ENCODE measurements at regions of chr17 and their contacts with region 1.

Region 1: GRCh38 chr17:28598799-28599310 is at the start of gene SPAG5:
- DNase-seq: peak; percentile 96
- H3K4me3 Mint-ChIP-seq: peak within 1 kb of the TSS; percentile 96
- H3K27ac Mint-ChIP-seq: peak within 1 kb of the TSS; percentile 98
- H3K4me1 Mint-ChIP-seq: peaks cover 26% of the 10 kb centered on the region
- H3K27me3 Mint-ChIP-seq: no peaks in the 10 kb centered on the region
- total RNA-seq, gene SPAG5: 81.9 and 83.1 TPM in 2 replicates

Region 2: DNA sequence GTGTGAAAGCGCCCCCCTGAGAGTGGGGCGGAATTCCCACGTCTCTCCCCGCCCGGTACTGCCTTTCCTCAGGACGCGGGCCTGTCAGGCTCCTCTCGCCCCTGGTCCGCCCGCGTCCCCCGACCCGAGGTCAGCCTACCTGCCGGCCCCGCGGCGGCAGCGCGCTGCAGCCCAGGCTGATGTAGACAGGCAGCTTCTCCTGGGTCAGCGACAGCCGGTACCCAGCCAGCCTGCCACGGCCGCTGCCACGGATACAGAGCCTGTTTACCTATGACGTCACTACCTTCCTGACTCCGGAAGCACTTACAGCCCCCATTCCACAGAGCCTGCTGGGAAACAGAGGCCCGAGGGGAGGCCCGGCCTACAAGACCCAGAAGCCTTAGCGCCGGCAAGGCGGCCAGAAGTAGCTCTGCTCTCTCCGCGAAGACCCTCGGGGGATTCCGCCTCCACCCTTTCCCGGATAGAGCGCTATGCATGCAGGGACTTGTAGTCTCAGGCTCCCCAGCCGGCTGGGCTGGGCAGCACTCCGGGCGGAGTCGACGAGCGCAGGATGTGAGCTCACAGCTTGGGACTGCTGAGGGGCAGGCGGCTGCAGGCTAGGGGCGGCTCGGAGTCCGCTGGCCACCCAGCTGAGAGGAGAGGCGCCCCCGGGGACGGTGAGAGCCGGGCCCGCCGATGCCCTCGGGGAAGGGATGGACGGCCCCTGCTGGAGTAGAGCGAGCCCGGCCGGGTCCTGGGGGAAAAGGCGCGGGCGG is 263.5 kb before region 1 on chr17 and contains the starts of genes IFT20 and TNFAIP1:
- intact Hi-C with region 1: loop called (anchors 5 kb)
- DNase-seq: peak; percentile 98
- H3K4me3 Mint-ChIP-seq: peak within 1 kb of the TSS; percentile 99
- H3K27ac Mint-ChIP-seq: peak within 1 kb of the TSS; percentile 97
- H3K4me1 Mint-ChIP-seq: peaks cover 45% of the 10 kb centered on the region
- H3K27me3 Mint-ChIP-seq: no peaks in the 10 kb centered on the region
- total RNA-seq, gene IFT20: 21.3 and 25.8 TPM in 2 replicates
- total RNA-seq, gene TNFAIP1: 35.1 and 39.9 TPM in 2 replicates

Region 3: DNA sequence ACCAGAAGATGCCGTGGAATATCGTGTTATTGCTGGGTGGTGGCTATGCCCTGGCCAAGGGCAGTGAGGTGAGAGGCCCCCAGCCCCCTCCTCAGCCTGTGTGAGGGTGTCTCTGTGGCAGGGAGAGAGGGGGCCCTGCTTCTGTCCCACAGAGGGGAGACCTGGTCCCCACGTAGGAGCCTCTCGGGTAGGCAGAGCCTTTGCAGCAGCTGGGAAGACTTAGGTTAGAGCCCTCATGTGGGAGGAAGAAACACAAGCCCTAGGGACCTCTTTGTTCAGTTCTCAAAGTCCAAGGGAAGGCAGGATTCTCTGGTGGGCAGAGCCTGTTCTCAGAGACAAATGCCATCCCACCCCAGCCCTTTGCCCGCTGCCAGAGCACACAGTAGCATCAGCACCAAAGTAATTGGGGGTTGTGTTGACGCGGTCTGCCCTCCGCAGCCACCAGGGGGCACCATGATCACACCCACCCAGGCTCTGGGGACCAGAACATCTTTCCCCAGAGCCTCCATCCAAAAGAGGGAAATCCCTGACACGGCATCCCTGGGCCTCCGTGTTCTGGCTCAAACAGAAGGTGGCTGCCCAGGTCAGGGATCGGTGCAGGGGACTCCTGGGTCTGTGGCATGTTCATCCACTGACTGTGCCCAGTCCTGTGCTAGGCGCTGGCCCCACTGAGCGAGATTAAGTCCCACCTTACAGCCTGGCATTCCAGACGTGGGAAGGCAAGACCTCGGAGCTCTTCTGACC is 104.2 kb before region 1 on chr17:
- intact Hi-C with region 1: loop called (anchors 2 kb)
- DNase-seq: peak; percentile 68
- H3K4me3 Mint-ChIP-seq: no peak overlapping the region
- H3K27ac Mint-ChIP-seq: no peak overlapping the region
- H3K4me1 Mint-ChIP-seq: peaks cover 4% of the 10 kb centered on the region
- H3K27me3 Mint-ChIP-seq: no peaks in the 10 kb centered on the region

Region 4: GRCh38 chr17:28571255-28572122 is 27.4 kb before region 1 on chr17 and contains the start of gene PIGS:
- intact Hi-C with region 1: loop called (anchors 1 kb)
- DNase-seq: peak; percentile 91
- H3K4me3 Mint-ChIP-seq: peak within 1 kb of the TSS; percentile 94
- H3K27ac Mint-ChIP-seq: peak within 1 kb of the TSS; percentile 88
- H3K4me1 Mint-ChIP-seq: peaks cover 81% of the 10 kb centered on the region
- H3K27me3 Mint-ChIP-seq: no peaks in the 10 kb centered on the region
- total RNA-seq, gene PIGS: 57.8 and 61.2 TPM in 2 replicates

Region 5: GRCh38 chr17:28612936-28613872 is 14.3 kb after region 1 on chr17:
- intact Hi-C with region 1: loop called (anchors 2 kb)
- DNase-seq: peak; percentile 4
- H3K4me3 Mint-ChIP-seq: no peak overlapping the region
- H3K27ac Mint-ChIP-seq: no peak overlapping the region
- H3K4me1 Mint-ChIP-seq: no peaks in the 10 kb centered on the region
- H3K27me3 Mint-ChIP-seq: no peaks in the 10 kb centered on the region

Region 6: GRCh38 chr17:28661635-28662537 is 63.0 kb after region 1 on chr17 and contains the starts of genes SDF2 and SUPT6H:
- intact Hi-C with region 1: loop called (anchors 1 kb)
- DNase-seq: peak; percentile 90
- H3K4me3 Mint-ChIP-seq: peak within 1 kb of the TSS; percentile 100
- H3K27ac Mint-ChIP-seq: peak within 1 kb of the TSS; percentile 99
- H3K4me1 Mint-ChIP-seq: peaks cover 53% of the 10 kb centered on the region
- H3K27me3 Mint-ChIP-seq: no peaks in the 10 kb centered on the region
- total RNA-seq, gene SDF2: 47.9 and 51.0 TPM in 2 replicates
- total RNA-seq, gene SUPT6H: 106 and 108 TPM in 2 replicates

Region 7: DNA sequence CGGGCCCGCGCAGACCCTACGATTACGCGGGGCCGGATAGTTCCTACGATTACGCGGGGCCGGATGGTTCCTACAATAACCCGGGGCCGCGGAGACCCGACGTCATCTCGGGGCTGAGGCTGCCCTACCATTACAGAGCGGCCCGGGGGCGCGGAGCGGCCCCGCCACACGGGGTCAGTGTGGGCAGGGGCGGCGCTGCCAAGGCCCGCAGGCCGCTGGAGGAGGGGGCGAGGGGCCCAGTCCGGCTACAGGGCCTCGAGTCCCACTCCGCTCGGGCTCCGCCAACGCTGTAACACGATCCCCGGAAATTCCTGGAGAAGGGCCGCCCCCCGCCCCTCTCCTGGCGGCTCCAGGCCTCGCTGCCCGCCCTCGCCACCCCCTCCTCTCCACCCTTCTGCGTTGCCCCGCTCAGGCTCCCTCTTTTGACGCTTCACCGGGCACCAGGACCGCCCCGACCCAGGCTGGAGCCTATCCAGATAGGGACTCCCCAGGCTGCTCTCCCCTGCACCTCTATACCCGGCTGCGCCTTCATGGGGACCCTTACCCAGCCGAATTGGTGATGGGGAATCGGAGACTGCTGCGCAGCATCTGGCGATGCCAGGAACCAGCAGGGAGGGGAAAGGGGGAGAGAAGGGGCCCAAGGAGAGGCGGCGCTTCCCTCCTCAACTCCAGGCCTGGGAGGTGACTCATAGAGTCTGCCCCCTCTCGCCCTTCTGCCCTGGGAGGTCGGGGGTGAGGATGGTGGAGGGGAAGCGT is 118.9 kb after region 1 on chr17 and contains the start of gene RAB34:
- intact Hi-C with region 1: loop called (anchors 2 kb)
- DNase-seq: no peak
- H3K4me3 Mint-ChIP-seq: peak within 1 kb of the TSS; percentile 65
- H3K27ac Mint-ChIP-seq: peak within 1 kb of the TSS; percentile 73
- H3K4me1 Mint-ChIP-seq: peaks cover 35% of the 10 kb centered on the region
- H3K27me3 Mint-ChIP-seq: peaks cover 23% of the 10 kb centered on the region
- total RNA-seq, gene RAB34: 17.6 and 18.2 TPM in 2 replicates

Measured in activated T-helper 1 cell treated with anti-CD3 and anti-CD28 coated beads, Interleukin-12 subunit alpha, Interleukin-12 subunit beta, Interleukin-2, Interleukin-4 antibody, amounts not matched to agents 30 ng/mL and 10 ng/mL and 1 ng/mL, durations not matched to agents 14 hours and 24 hours and 36 hours (primary cell).